Activated B cell treated with CpG ODN at 0.5 μM for 24 hours (primary cell): ENCODE measurements at regions of chr20 and their contacts with region 1.

Region 1: DNA sequence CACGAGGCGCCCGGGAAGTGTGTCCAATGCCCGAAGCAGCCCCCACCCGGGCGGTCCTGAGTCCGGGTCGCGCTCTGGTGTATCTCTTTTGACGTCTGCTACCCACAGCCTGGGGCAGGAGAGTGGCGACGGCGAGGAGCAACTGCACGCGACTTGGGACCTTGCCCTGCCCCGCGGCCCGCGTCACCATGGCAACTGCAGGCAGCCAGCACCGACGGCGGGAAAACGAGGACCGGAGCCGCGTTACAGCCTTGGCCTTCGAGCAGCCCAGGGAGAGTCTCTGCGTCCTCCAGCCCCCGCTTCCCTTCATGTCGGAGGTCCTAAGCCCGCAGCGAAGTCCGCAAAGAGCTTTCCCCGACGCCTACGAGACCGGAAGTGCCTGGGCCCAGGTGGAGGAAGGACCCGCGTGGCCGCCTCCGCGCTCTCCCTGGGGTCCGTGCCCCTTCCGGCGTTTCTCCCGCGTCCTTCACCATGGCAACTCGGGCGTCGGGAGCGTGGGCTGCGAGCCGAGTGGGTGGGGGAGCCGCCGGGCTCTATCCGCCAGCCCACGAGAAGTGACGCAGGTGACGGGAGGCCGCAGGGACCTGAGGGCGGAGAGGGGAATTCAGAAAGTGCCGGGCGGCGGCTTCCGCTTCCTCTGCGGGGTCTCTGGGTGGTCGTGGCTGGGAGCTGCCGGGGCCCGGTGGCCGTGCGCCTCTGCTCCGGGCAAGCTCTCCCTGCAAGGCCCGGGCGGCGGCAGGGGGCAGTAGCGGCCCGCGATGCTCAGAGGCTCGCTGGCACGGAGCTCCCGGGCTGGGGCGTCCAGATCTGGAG is 88.6 kb upstream of the TGM3 start:
- DNase-seq: peak; percentile 76
- ATAC-seq: peak; percentile 76
- H3K4me3 Mint-ChIP-seq: peak overlapping the region; percentile 82
- H3K27ac Mint-ChIP-seq: peak overlapping the region; percentile 38
- H3K4me1 Mint-ChIP-seq: peaks cover 19% of the 10 kb centered on the region
- H3K27me3 Mint-ChIP-seq: no peaks in the 10 kb centered on the region
- CTCF ChIP-seq: no peak

Region 2: DNA sequence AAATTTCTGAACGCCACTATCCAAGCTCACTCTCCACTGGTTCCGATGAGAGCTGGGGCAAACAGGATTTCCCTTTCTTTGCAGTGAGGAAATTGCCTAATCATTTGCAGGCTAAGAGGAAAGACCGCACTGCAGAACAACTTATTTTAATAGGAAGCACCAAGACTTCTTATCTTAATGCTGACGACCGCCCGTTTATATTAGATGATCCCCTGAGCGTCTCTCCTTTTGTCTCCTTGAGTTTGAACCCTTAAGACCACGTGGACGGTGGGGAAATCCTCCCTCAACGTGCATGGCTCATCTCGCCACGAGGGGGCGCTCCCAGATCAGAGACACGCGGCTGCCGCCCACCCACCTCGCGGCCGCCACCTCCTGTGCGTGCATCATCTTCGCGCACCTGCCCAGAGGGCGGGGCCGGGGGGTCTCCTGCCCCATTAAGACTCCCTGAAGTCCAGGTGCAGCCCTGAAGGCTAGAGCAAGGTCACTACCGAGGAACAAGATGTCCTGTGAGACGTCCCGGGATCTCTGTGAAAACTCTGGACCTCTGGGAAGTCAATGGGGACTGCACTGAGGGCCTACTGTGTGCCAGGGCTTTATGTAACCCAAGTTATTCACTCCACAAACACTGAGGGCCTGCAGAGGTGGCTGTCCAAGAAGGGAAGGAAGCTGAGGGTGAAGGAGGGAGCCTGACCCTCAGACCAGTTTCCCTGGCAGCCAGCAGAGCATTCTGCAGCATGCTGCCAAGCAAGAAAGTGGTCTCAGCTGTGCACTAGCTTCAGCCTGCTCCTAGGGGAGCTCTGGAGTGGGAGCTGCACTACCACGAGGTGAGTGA is 241.4 kb before region 1 on chr20:
- CTCF ChIA-PET with region 1: interaction called, 3 read pairs
- POLR2A ChIA-PET with region 1: no interaction called
- intact Hi-C with region 1: loop called (anchors 1 kb)
- DNase-seq: peak; percentile 81
- ATAC-seq: peak; percentile 91
- H3K4me3 Mint-ChIP-seq: peak overlapping the region; percentile 77
- H3K27ac Mint-ChIP-seq: peak overlapping the region; percentile 78
- H3K4me1 Mint-ChIP-seq: peaks cover 17% of the 10 kb centered on the region
- H3K27me3 Mint-ChIP-seq: peaks cover 1% of the 10 kb centered on the region
- CTCF ChIP-seq: peak; percentile 68

Region 3: GRCh38 chr20:2301164-2301622 is 94.0 kb after region 1 on chr20:
- CTCF ChIA-PET with region 1: interaction called, 14 read pairs
- POLR2A ChIA-PET with region 1: interaction called, 9 read pairs
- intact Hi-C with region 1: loop called (anchors 1 kb)
- DNase-seq: peak; percentile 52
- ATAC-seq: peak; percentile 94
- H3K4me3 Mint-ChIP-seq: peak overlapping the region; percentile 8
- H3K27ac Mint-ChIP-seq: peak overlapping the region; percentile 87
- H3K4me1 Mint-ChIP-seq: peaks cover 33% of the 10 kb centered on the region
- H3K27me3 Mint-ChIP-seq: no peaks in the 10 kb centered on the region
- CTCF ChIP-seq: no peak

Region 4: DNA sequence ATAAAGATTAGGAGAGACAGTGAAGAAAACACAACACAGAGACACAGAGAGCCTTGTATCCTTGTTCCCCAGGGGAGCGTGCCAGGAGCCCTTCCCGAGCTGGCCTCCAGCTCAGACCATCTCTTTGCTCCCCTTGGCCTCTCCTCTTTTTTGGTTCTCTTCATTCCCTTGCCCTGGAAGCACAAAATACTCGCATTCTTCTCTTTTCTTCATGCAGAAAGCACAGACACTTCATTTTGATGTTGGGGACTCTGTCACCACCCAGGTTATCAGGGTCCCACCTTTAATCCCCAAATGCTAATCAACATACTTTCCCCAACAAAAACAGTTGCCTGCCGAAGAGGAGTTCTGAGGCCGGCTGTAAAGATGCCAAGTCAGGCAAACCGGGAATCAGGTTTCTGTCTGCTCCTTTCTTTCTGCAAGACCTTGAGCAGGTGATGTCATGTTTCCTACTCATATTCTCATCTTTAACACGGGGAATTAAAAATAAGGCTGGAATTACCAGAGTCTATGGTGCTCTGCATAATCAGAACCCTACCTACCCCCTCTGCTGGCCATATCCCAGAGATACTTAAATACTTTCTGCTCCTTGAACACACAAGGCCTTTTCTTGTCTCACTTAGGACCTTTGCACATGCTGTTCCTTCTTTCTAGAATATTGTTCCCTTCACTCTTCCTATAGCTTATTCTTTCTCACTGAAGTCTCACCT is 195.3 kb after region 1 on chr20:
- CTCF ChIA-PET with region 1: interaction called, 10 read pairs
- POLR2A ChIA-PET with region 1: no interaction called
- intact Hi-C with region 1: loop called (anchors 1 kb)
- DNase-seq: no peak
- ATAC-seq: no peak
- H3K4me3 Mint-ChIP-seq: no peak overlapping the region
- H3K27ac Mint-ChIP-seq: no peak overlapping the region
- H3K4me1 Mint-ChIP-seq: no peaks in the 10 kb centered on the region
- H3K27me3 Mint-ChIP-seq: no peaks in the 10 kb centered on the region
- CTCF ChIP-seq: no peak

Region 5: GRCh38 chr20:2470423-2471193 is 263.4 kb after region 1 on chr20 and contains the start of gene SNRPB:
- CTCF ChIA-PET with region 1: interaction called, 7 read pairs
- POLR2A ChIA-PET with region 1: interaction called, 11 read pairs
- intact Hi-C with region 1: loop called (anchors 1 kb)
- DNase-seq: peak; percentile 95
- ATAC-seq: peak; percentile 94
- H3K4me3 Mint-ChIP-seq: peak within 1 kb of the TSS; percentile 99
- H3K27ac Mint-ChIP-seq: peak within 1 kb of the TSS; percentile 97
- H3K4me1 Mint-ChIP-seq: peaks cover 50% of the 10 kb centered on the region
- H3K27me3 Mint-ChIP-seq: no peaks in the 10 kb centered on the region
- CTCF ChIP-seq: no peak
- total RNA-seq, gene SNRPB: 215 and 234 TPM in 2 replicates

Region 6: DNA sequence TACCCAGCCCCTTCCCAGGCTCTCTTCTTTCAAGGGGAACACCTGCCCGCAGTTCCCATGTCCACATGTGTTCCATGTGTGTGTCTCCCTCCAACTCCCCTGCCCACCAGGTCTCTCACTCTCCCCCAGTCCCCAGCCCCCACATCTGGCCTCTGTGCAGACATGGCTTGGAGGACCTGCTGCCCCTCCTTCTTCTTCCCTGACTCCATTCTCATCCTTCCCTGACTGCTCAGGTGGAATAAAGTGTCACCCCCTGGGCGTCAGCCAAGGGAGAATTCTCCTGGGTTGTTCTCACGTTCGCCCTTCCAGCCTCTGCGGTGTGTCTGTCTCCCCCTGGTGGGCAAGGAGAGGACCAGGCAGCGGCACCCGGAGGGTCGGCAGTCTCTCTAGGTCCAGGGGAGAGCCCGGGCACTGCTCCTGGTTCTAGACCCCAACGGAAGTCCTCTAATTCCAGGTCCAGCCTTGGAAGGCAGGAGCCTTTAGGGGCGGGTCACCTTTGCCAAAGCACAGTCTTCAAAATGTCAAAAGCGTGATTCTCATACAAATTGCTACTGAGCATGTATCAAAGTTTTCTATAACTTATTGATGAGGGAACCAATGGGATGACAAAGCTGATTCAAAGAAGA is 535.9 kb after region 1 on chr20:
- CTCF ChIA-PET with region 1: no interaction called
- POLR2A ChIA-PET with region 1: no interaction called
- intact Hi-C with region 1: loop called (anchors 5 kb)
- DNase-seq: peak; percentile 43
- ATAC-seq: peak; percentile 90
- H3K4me3 Mint-ChIP-seq: no peak overlapping the region
- H3K27ac Mint-ChIP-seq: no peak overlapping the region
- H3K4me1 Mint-ChIP-seq: peaks cover 3% of the 10 kb centered on the region
- H3K27me3 Mint-ChIP-seq: peaks cover 25% of the 10 kb centered on the region
- CTCF ChIP-seq: no peak